ENCODE measurements at regions of chr3 and their contacts with region 1.

Region 1: DNA sequence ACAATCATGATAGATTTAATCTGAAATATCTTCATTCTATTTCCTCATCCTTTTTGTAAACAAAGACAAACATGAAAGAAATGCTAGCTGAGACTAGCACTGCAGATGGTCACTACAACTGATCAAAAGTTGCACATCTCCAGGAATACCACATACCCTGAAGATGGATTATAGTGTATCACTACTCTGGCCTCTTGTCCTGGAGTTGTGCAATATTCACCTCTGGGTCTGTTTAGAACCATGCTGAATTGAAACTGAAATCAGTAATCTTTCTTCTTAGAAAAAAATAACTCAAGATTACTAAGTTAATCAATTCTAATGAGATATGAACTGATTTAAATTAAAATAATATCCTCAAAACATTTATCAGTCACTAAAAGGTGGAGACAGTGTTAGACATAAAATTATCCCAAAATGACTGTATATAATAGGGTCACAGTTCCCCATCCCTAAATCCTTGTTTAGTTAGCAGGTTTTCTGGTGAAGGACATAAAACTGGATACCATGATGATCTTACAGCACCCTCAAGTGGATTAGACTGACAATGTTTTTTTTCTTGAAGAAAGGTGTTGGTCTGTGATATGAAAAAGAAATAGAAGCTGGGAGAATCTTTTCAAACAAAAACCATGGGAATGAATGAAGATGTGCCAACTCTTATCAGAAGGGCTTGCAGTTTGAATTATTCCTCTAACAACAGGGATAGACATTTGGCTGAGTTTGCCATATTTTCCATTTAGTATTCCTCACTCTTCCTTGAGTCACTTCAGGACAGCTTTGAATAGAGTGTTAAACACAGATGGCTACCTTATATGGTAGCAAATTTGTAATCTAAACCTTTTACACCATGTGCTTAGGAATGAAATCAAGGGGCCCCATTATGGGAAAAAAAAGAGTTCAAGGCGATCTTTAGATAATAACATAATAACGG is 7.1 kb upstream of the TTC14 start:
- DNase-seq: peak; percentile 59
- ATAC-seq: peak; percentile 61
- H3K4me3 ChIP-seq: no peak overlapping the region
- H3K27ac ChIP-seq: no peak overlapping the region
- H3K4me1 ChIP-seq: no peaks in the 10 kb centered on the region
- H3K27me3 ChIP-seq: no peaks in the 10 kb centered on the region
- CTCF ChIP-seq: peak; percentile 70
- POLR2A ChIP-seq: no peak
- RAD21 ChIP-seq: peak; percentile 80

Region 2: GRCh38 chr3:179750720-179751328 is 844.1 kb before region 1 on chr3:
- CTCF ChIA-PET with region 1: no interaction called
- POLR2A ChIA-PET with region 1: no interaction called
- dilution Hi-C with region 1: no loop called
- in situ Hi-C with region 1: loop called (anchors 25 kb)
- intact Hi-C with region 1: no loop called
- DNase-seq: peak; percentile 28
- ATAC-seq: peak; percentile 77
- H3K4me3 ChIP-seq: no peak overlapping the region
- H3K27ac ChIP-seq: no peak overlapping the region
- H3K4me1 ChIP-seq: no peaks in the 10 kb centered on the region
- H3K27me3 ChIP-seq: no peaks in the 10 kb centered on the region
- CTCF ChIP-seq: peak; percentile 57
- POLR2A ChIP-seq: no peak
- RAD21 ChIP-seq: peak; percentile 55

Region 3: DNA sequence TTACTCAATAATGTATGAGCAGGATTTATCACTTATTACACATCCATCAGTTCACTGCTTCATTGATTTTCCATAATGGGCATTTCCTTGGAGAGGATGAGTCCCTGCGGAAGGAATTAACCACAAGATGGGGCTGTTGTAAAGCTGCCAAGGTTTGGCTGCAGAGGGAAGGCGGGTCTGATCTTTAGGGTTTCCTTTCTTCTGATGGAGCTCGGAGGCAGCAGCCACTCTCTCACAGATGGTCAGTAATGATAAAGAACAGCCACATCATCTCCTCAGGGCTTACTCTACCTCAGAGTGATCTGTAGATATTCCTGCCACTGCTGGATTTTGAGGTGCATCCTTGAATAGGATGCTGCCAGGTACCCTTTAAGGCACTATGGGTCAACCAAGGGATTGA is 826.8 kb before region 1 on chr3:
- CTCF ChIA-PET with region 1: interaction called, 3 read pairs
- POLR2A ChIA-PET with region 1: no interaction called
- dilution Hi-C with region 1: no loop called
- in situ Hi-C with region 1: loop called (anchors 25 kb)
- intact Hi-C with region 1: loop called (anchors 2 kb)
- DNase-seq: peak; percentile 70
- ATAC-seq: peak; percentile 86
- H3K4me3 ChIP-seq: no peak overlapping the region
- H3K27ac ChIP-seq: no peak overlapping the region
- H3K4me1 ChIP-seq: no peaks in the 10 kb centered on the region
- H3K27me3 ChIP-seq: no peaks in the 10 kb centered on the region
- CTCF ChIP-seq: peak; percentile 70
- POLR2A ChIP-seq: no peak
- RAD21 ChIP-seq: peak; percentile 79

Region 4: GRCh38 chr3:179929091-179929529 is 665.8 kb before region 1 on chr3:
- CTCF ChIA-PET with region 1: interaction called, 8 read pairs
- POLR2A ChIA-PET with region 1: no interaction called
- dilution Hi-C with region 1: no loop called
- in situ Hi-C with region 1: loop called (anchors 5 kb)
- intact Hi-C with region 1: loop called (anchors 1 kb)
- DNase-seq: peak; percentile 60
- ATAC-seq: peak; percentile 85
- H3K4me3 ChIP-seq: no peak overlapping the region
- H3K27ac ChIP-seq: no peak overlapping the region
- H3K4me1 ChIP-seq: no peaks in the 10 kb centered on the region
- H3K27me3 ChIP-seq: no peaks in the 10 kb centered on the region
- CTCF ChIP-seq: peak; percentile 76
- POLR2A ChIP-seq: no peak
- RAD21 ChIP-seq: peak; percentile 60

Measured in IMR-90 (cell line).